ENCODE measurements at regions of chr16 and their contacts with region 1.

Region 1: GRCh38 chr16:8943966-8944759 is 19.5 kb downstream of the USP7 start:
- DNase-seq: no peak
- H3K4me3 ChIP-seq: peak overlapping the region in 4 of 8 donors; percentile 16 to 48 (median 24)
- H3K27ac ChIP-seq: peak overlapping the region in 6 of 8 donors; percentile 14 to 69 (median 64)
- H3K4me1 ChIP-seq: peaks cover 74 to 100% (median 98%) of the 10 kb centered on the region in 6 donors
- H3K27me3 ChIP-seq: no peaks in the 10 kb centered on the region
- CTCF ChIP-seq: peak in 2 of 11 experiments; percentile 9 to 33
- POLR2A ChIP-seq: no peak

Region 2: DNA sequence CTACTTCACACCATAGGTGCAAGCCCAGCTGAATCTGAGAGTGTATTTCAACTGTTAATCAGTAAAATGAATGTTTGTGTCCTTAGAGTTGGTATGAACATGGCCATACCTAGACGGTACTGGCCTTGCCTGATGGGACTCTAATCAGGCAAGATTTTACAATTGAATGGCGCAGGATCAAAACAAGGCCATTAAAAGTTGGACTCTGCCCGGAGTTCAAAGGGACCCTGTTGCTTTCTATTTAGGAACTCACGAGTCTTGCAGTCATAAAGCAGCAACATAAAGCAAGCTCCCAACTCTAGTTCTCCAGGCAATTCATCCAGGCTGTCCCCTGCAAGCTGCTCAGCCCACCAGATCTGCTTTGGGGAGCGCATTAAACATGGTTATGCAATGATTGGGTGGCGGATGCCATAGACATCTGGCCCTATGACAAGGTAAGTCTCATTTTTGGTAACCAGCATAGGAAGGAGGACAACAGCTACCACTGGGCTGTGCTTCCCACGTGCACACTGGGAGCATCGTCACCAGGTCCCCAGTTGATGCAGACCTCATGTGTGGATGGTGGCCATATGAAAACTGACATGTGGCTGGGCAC is 155.5 kb before region 1 on chr16:
- intact Hi-C with region 1: no loop called
- DNase-seq: no peak
- H3K4me3 ChIP-seq: no peak overlapping the region
- H3K27ac ChIP-seq: no peak overlapping the region
- H3K4me1 ChIP-seq: no peaks in the 10 kb centered on the region
- H3K27me3 ChIP-seq: no peaks in the 10 kb centered on the region
- CTCF ChIP-seq: no peak
- POLR2A ChIP-seq: no peak

Region 3: GRCh38 chr16:8806272-8806983 is 137.7 kb before region 1 on chr16:
- intact Hi-C with region 1: no loop called
- DNase-seq: no peak
- H3K4me3 ChIP-seq: no peak overlapping the region
- H3K27ac ChIP-seq: no peak overlapping the region
- H3K4me1 ChIP-seq: peaks cover 0 to 4% (median 0%) of the 10 kb centered on the region in 6 donors
- H3K27me3 ChIP-seq: no peaks in the 10 kb centered on the region
- CTCF ChIP-seq: no peak
- POLR2A ChIP-seq: no peak

Region 4: GRCh38 chr16:9102379-9102778 is 158.2 kb after region 1 on chr16:
- intact Hi-C with region 1: loop called (anchors 10 kb)
- DNase-seq: no peak
- H3K4me3 ChIP-seq: peak overlapping the region in 1 of 8 donors; percentile 18
- H3K27ac ChIP-seq: peak overlapping the region in 5 of 8 donors; percentile 3 to 78 (median 24)
- H3K4me1 ChIP-seq: peaks cover 80 to 100% (median 100%) of the 10 kb centered on the region in 6 donors
- H3K27me3 ChIP-seq: no peaks in the 10 kb centered on the region
- CTCF ChIP-seq: no peak
- POLR2A ChIP-seq: no peak

Region 5: GRCh38 chr16:9340526-9341256 is 396.5 kb after region 1 on chr16:
- intact Hi-C with region 1: no loop called
- DNase-seq: no peak
- H3K4me3 ChIP-seq: no peak overlapping the region
- H3K27ac ChIP-seq: no peak overlapping the region
- H3K4me1 ChIP-seq: no peaks in the 10 kb centered on the region
- H3K27me3 ChIP-seq: peaks cover 0 to 10% (median 0%) of the 10 kb centered on the region in 7 donors
- CTCF ChIP-seq: no peak
- POLR2A ChIP-seq: no peak

Measured in spleen (tissue), 13 donors.